CD4-positive, alpha-beta memory T cell (primary cell): ENCODE measurements at regions of chr12 and their contacts with region 1.

Region 1: DNA sequence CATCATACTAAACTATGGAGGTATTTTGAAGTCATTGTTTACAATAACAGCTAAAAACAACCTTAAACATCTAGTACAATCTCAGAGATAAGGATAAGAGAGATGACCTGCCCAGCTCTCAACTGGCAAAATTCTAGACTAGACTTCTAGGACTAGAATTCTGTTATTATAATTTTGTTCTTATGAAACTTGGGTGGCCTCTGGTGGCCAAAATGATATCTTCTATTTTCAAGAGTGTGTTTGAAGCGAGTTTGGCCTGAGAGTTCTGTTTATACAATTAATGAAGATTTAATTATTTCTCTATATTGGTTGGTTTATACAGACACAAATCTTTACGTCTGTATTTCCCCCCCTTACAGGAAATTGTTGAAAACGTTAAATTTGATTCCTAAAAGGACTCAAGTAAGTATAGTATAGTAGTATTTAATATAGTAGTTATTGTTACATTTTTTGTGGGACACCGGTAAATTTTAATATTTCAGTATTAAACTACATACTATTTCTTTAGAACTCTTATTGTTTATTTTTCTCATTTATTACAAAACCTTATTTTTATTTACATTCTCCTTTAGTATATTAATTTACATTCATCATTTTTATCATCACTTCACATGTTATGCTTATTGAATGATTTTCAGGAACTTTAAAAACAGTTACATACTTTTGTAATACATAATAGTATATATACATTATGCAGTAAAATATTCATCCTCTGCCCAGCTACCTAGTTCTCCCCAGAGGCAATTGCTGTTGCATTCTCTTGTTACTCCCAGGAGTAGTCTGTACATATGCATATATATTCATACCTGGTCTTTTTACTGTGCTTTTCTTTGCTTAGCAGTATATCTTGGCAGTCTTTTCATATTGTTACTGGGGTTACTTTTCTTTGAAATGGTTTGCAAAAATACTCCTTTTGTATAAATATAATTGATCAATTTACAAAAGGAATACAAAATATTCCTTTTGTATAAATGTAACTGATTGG is 6.6 kb downstream of the PPHLN1 start:
- DNase-seq: peak in 4 of 5 donors; percentile 33 to 47 (median 44)
- H3K4me3 ChIP-seq: no peak overlapping the region
- H3K4me3 Mint-ChIP-seq: no peak overlapping the region
- H3K27ac ChIP-seq: peak overlapping the region; percentile 16
- H3K27ac Mint-ChIP-seq: peak overlapping the region in 3 of 7 donors; percentile 17 to 50 (median 35)
- H3K4me1 ChIP-seq: peaks cover 60% of the 10 kb centered on the region
- H3K4me1 Mint-ChIP-seq: peaks cover 43 to 68% (median 53%) of the 10 kb centered on the region in 4 donors
- H3K27me3 ChIP-seq: no peaks in the 10 kb centered on the region
- H3K27me3 Mint-ChIP-seq: no peaks in the 10 kb centered on the region

Region 2: DNA sequence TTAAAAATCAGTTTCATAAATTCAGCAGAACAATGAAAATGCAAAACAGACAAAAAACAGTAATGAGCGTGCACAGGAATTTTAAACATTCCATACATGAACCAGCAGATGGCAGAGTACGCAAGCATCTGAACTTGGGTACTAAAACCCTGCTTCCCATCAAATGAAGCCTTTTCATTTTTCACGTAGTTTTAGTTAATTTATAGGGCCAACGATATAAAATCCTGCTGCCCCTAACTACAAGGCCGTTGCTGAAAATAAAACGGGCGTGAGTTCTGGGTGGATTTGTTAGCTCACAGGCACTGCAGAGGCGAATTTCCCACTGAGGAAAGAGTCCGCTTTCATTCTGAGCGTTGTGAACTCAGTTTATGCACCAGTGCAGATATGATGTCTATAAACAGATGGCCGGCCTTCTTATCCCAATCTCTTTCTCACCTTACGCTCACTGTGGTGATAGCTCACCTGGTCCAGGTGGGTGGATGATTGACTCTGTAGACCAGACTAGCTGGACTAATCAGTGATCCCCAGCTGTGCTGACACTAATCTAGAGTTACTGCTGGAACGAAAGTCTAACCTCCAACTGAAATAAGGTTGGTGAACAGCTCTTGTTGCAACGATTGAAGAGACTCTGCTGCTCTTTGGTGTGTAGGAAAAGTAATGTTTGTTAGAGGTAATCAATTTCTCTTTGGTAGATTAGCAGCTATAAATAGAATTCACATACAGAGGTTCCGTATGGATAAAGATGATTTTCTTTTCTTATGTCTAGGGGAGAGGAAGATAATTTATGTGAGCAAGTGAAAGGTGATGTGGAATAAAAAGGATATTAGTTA is 1055.3 kb before region 1 on chr12:
- CTCF ChIA-PET with region 1: no interaction called
- POLR2A ChIA-PET with region 1: no interaction called
- intact Hi-C with region 1: loop called (anchors 5 kb)
- DNase-seq: peak; percentile 2 to 16 (median 6)
- H3K4me3 ChIP-seq: no peak overlapping the region
- H3K4me3 Mint-ChIP-seq: no peak overlapping the region
- H3K27ac ChIP-seq: no peak overlapping the region
- H3K27ac Mint-ChIP-seq: no peak overlapping the region
- H3K4me1 ChIP-seq: no peaks in the 10 kb centered on the region
- H3K4me1 Mint-ChIP-seq: no peaks in the 10 kb centered on the region
- H3K27me3 ChIP-seq: no peaks in the 10 kb centered on the region
- H3K27me3 Mint-ChIP-seq: peaks cover 3 to 7% of the 10 kb centered on the region in 2 donors

Region 3: DNA sequence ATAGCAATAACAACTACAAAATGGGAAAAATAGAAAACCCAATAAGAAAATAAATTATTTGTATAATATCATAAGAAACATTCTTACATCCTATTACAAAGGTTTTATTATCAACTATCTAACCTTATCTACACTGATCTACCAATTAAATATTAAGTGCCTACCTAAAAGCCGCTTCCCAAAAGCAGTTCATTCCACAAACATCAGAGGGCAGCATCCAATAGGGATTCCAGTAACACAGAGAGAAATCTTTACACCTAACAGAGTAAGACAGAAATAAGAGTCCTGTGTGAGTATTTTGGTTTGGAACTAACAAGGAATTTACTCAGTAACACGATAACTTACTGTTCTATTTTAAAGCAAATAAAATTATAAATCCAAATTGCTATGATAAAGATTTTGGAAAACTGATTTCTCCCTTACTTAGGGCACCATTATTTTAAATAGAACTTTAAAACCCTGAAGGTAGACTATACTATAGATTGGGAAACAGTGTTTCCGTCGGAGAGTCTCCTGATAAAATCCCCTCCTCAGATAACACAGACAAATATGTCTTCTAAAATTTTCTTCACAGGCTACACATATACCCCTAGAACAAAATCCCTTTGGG is 202.9 kb before region 1 on chr12:
- CTCF ChIA-PET with region 1: interaction called, 5 read pairs
- POLR2A ChIA-PET with region 1: interaction called, 3 read pairs
- intact Hi-C with region 1: loop called (anchors 1 kb)
- DNase-seq: peak in 4 of 5 donors; percentile 26 to 37 (median 36)
- H3K4me3 ChIP-seq: no peak overlapping the region
- H3K4me3 Mint-ChIP-seq: no peak overlapping the region
- H3K27ac ChIP-seq: no peak overlapping the region
- H3K27ac Mint-ChIP-seq: no peak overlapping the region
- H3K4me1 ChIP-seq: peaks cover 5% of the 10 kb centered on the region
- H3K4me1 Mint-ChIP-seq: peaks cover 32 to 45% (median 38%) of the 10 kb centered on the region in 4 donors
- H3K27me3 ChIP-seq: no peaks in the 10 kb centered on the region
- H3K27me3 Mint-ChIP-seq: no peaks in the 10 kb centered on the region